MCF 10A (cell line): ENCODE measurements at regions of chr15 and their contacts with region 1.

Region 1: DNA sequence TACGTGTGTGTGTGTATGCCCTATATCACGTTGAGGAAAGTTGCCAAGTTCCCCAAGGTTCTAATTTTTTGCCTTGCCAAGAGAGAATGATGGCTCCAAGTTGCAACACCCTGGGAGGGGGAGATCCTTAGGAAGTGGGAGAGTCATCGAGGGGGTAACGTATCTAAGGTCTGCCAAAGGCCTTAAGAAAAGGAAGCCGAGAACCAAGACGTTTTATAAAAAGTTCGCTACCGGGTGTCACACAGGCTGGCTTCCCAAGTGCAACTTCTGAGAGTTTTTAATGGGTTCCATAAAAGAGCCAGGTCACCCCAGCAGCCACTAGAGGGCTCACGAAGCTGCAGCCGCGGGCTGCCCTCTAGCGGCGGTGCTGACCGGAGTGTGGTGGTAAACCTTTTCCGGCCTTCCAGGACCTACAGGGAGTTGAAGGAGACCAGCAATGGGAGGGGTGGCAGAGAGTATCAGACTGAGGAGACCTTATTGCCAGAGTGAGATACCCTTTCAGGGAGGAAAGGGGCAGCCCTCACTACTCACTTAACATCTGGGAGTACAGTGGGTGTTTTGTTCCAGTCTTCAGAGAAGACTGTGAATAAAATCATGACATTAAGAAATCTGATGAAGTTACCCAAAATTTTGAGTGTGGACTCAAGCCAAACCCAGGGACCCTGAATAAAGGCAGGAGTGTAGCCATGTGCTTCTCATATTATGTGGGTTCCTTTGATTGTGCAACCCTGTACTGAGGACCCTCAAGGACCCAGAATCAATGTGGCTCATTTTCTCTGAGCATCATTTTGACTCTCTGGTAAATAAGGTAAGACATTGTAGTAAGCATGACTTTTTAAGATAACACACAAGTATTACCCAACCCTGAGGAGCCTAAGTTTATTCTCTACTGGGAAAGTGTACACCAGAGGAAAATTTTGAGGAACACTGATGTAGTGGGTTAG is 2.5 kb upstream of the RFX7 start:
- DNase-seq: peak; percentile 90
- H3K4me3 Mint-ChIP-seq: peak overlapping the region; percentile 79
- H3K27ac Mint-ChIP-seq: peak overlapping the region; percentile 32
- H3K4me1 Mint-ChIP-seq: peaks cover 14% of the 10 kb centered on the region
- H3K27me3 Mint-ChIP-seq: no peaks in the 10 kb centered on the region
- CTCF ChIP-seq: peak; percentile 99

Region 2: GRCh38 chr15:55884223-55884622 is 361.9 kb before region 1 on chr15:
- CTCF ChIA-PET with region 1: no interaction called
- POLR2A ChIA-PET with region 1: no interaction called
- intact Hi-C with region 1: no loop called
- DNase-seq: no peak
- H3K4me3 Mint-ChIP-seq: no peak overlapping the region
- H3K27ac Mint-ChIP-seq: peak overlapping the region; percentile 17
- H3K4me1 Mint-ChIP-seq: peaks cover 12% of the 10 kb centered on the region
- H3K27me3 Mint-ChIP-seq: no peaks in the 10 kb centered on the region
- CTCF ChIP-seq: no peak

Region 3: DNA sequence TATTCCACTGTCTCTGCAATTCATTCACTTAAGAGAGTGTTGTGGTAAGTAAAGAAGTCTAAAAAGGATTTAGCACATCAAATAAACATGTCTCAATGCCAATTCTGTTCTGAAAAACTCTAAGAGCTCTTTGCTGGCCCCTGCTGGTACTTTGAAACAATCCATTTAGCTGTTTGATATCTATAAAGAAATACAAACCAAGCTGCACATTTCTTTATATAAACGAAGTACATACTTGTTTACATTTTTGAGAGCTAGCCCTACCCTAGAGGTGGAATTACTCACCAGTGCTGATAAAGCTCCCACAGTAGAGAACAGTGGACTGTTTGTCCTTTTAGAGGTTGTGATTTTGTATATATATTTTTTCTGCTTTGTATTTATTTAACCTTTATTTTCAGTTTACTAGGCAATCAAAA is 328.3 kb before region 1 on chr15:
- CTCF ChIA-PET with region 1: interaction called, 7 read pairs
- POLR2A ChIA-PET with region 1: interaction called, 14 read pairs
- intact Hi-C with region 1: loop called (anchors 5 kb)
- DNase-seq: peak; percentile 88
- H3K4me3 Mint-ChIP-seq: no peak overlapping the region
- H3K27ac Mint-ChIP-seq: peak overlapping the region; percentile 67
- H3K4me1 Mint-ChIP-seq: peaks cover 17% of the 10 kb centered on the region
- H3K27me3 Mint-ChIP-seq: no peaks in the 10 kb centered on the region
- CTCF ChIP-seq: peak; percentile 52

Region 4: DNA sequence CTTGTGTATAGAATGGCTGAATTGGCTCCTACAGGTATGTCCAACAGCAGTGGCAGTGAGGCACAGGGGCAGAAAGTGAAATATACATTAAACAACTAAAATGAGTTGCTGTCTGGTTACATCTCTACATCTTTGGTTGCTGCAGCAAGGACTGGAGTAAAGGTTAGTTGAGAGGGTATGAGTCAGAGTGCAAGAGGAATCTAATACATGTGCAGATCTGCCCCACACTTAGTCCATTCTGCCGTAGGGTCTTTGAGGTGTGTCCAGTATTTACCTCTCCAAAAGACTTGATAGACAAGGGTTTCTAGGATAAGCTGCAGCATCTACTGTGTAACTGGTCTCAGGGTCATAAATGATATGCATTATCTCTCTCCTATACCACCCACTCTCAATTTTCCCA is 246.5 kb before region 1 on chr15:
- CTCF ChIA-PET with region 1: interaction called, 6 read pairs
- POLR2A ChIA-PET with region 1: interaction called, 29 read pairs
- intact Hi-C with region 1: no loop called
- DNase-seq: peak; percentile 80
- H3K4me3 Mint-ChIP-seq: no peak overlapping the region
- H3K27ac Mint-ChIP-seq: peak overlapping the region; percentile 24
- H3K4me1 Mint-ChIP-seq: peaks cover 53% of the 10 kb centered on the region
- H3K27me3 Mint-ChIP-seq: no peaks in the 10 kb centered on the region
- CTCF ChIP-seq: no peak

Region 5: GRCh38 chr15:56234804-56235203 is 11.3 kb before region 1 on chr15:
- CTCF ChIA-PET with region 1: interaction called, 12 read pairs
- POLR2A ChIA-PET with region 1: no interaction called
- intact Hi-C with region 1: no loop called
- DNase-seq: peak; percentile 37
- H3K4me3 Mint-ChIP-seq: no peak overlapping the region
- H3K27ac Mint-ChIP-seq: no peak overlapping the region
- H3K4me1 Mint-ChIP-seq: peaks cover 31% of the 10 kb centered on the region
- H3K27me3 Mint-ChIP-seq: no peaks in the 10 kb centered on the region
- CTCF ChIP-seq: no peak

Region 6: GRCh38 chr15:56327701-56328452 is 81.7 kb after region 1 on chr15:
- CTCF ChIA-PET with region 1: interaction called, 5 read pairs
- POLR2A ChIA-PET with region 1: interaction called, 3 read pairs
- intact Hi-C with region 1: loop called (anchors 2 kb)
- DNase-seq: peak; percentile 98
- H3K4me3 Mint-ChIP-seq: peak overlapping the region; percentile 60
- H3K27ac Mint-ChIP-seq: peak overlapping the region; percentile 64
- H3K4me1 Mint-ChIP-seq: peaks cover 38% of the 10 kb centered on the region
- H3K27me3 Mint-ChIP-seq: no peaks in the 10 kb centered on the region
- CTCF ChIP-seq: no peak

Region 7: GRCh38 chr15:56365075-56365711 is 119.0 kb after region 1 on chr15 and contains the start of gene TEX9:
- CTCF ChIA-PET with region 1: interaction called, 17 read pairs
- POLR2A ChIA-PET with region 1: interaction called, 46 read pairs
- intact Hi-C with region 1: loop called (anchors 2 kb)
- DNase-seq: peak; percentile 86
- H3K4me3 Mint-ChIP-seq: peak within 1 kb of the TSS; percentile 76
- H3K27ac Mint-ChIP-seq: peak within 1 kb of the TSS; percentile 72
- H3K4me1 Mint-ChIP-seq: peaks cover 33% of the 10 kb centered on the region
- H3K27me3 Mint-ChIP-seq: no peaks in the 10 kb centered on the region
- CTCF ChIP-seq: no peak
- total RNA-seq, gene TEX9: 6.3 and 6.8 TPM in 2 replicates

Region 8: DNA sequence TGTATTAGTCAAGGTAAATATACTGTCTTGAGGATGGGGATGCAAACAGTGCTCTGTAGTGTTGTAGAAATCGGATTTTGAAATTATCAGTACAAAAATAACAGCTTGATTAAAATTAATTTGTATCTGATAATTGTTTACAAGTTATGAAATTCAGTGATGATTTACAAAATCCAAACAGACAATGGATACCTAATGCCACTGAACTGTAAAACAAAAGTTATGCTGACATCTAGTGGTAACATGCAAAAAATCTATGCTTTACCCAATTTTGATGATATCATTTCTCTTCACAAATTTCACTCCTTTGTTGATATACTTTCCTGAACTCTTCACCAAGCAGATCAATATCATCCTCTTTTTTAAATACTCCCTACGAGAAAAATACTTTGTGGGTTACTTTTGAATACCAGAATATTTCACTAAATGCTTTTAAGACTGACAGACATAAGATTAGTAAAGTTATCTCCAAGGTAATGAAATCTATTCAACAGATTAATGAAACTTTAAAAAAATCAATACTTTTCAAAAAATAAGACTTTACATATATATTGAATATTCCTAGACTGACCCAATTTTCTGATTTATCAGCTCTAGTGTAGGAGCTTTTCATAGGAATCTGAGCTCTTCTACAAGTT is 182.8 kb after region 1 on chr15:
- CTCF ChIA-PET with region 1: interaction called, 166 read pairs
- POLR2A ChIA-PET with region 1: interaction called, 12 read pairs
- intact Hi-C with region 1: loop called (anchors 1 kb)
- DNase-seq: peak; percentile 51
- H3K4me3 Mint-ChIP-seq: no peak overlapping the region
- H3K27ac Mint-ChIP-seq: peak overlapping the region; percentile 28
- H3K4me1 Mint-ChIP-seq: no peaks in the 10 kb centered on the region
- H3K27me3 Mint-ChIP-seq: no peaks in the 10 kb centered on the region
- CTCF ChIP-seq: peak; percentile 44

Region 9: GRCh38 chr15:56913670-56914069 is 667.5 kb after region 1 on chr15:
- CTCF ChIA-PET with region 1: no interaction called
- POLR2A ChIA-PET with region 1: no interaction called
- intact Hi-C with region 1: no loop called
- DNase-seq: no peak
- H3K4me3 Mint-ChIP-seq: no peak overlapping the region
- H3K27ac Mint-ChIP-seq: no peak overlapping the region
- H3K4me1 Mint-ChIP-seq: peaks cover 6% of the 10 kb centered on the region
- H3K27me3 Mint-ChIP-seq: no peaks in the 10 kb centered on the region
- CTCF ChIP-seq: no peak